ENCODE measurements at regions of chr5 and their contacts with region 1.

Region 1: GRCh38 chr5:87069974-87070624 is 197.6 kb upstream of the RASA1 start:
- DNase-seq: peak; percentile 59
- ATAC-seq: peak; percentile 86
- H3K4me3 ChIP-seq: no peak overlapping the region
- H3K27ac ChIP-seq: peak overlapping the region; percentile 17; the same call in 1 of the 2 replicates
- H3K4me1 ChIP-seq: peaks cover 17% of the 10 kb centered on the region
- H3K27me3 ChIP-seq: no peaks in the 10 kb centered on the region
- CTCF ChIP-seq: peak; percentile 47 to 62 (median 49); a peak in 4 of 6 replicates
- EP300 ChIP-seq: no peak
- POLR2A ChIP-seq: no peak
- RAD21 ChIP-seq: peak; percentile 90

Region 2: GRCh38 chr5:87094833-87095232 is 24.7 kb after region 1 on chr5:
- CTCF ChIA-PET with region 1: interaction called, 8 read pairs
- POLR2A ChIA-PET with region 1: no interaction called
- RAD21 ChIA-PET with region 1: interaction called, 9 read pairs
- SMC1A ChIA-PET with region 1: interaction called, 15 read pairs
- in situ Hi-C with region 1: no loop called
- intact Hi-C with region 1: no loop called
- DNase-seq: no peak
- ATAC-seq: no peak
- H3K4me3 ChIP-seq: no peak overlapping the region
- H3K27ac ChIP-seq: no peak overlapping the region
- H3K4me1 ChIP-seq: no peaks in the 10 kb centered on the region
- H3K27me3 ChIP-seq: no peaks in the 10 kb centered on the region
- CTCF ChIP-seq: no peak
- EP300 ChIP-seq: no peak
- POLR2A ChIP-seq: no peak
- RAD21 ChIP-seq: no peak

Region 3: DNA sequence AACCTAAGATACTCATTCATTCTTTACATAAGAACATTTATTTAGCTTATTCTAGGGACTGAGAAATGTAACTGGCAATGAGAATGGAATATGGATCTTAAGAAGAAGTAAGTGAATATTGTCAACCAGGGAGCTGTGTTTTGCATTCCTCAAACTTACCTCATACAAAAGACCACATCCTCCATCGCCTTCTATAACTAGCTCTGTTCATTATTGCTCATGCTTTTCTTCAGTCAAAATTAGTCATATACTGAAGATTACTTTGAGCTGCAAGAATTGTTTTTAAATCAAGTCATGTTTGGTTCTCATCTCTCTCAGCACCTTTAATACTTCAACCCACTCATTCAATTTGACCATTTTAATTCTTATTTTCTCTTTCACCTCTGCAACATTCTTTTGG is 57.3 kb after region 1 on chr5:
- CTCF ChIA-PET with region 1: interaction called, 11 read pairs
- POLR2A ChIA-PET with region 1: interaction called, 4 read pairs
- RAD21 ChIA-PET with region 1: interaction called, 15 read pairs
- SMC1A ChIA-PET with region 1: interaction called, 18 read pairs
- in situ Hi-C with region 1: no loop called
- intact Hi-C with region 1: no loop called
- DNase-seq: no peak
- ATAC-seq: peak; percentile 61
- H3K4me3 ChIP-seq: no peak overlapping the region
- H3K27ac ChIP-seq: no peak overlapping the region
- H3K4me1 ChIP-seq: peaks cover 3% of the 10 kb centered on the region
- H3K27me3 ChIP-seq: no peaks in the 10 kb centered on the region
- CTCF ChIP-seq: no peak
- EP300 ChIP-seq: no peak
- POLR2A ChIP-seq: no peak
- RAD21 ChIP-seq: no peak

Region 4: GRCh38 chr5:87231037-87231819 is 161.1 kb after region 1 on chr5:
- CTCF ChIA-PET with region 1: interaction called, 12 read pairs
- POLR2A ChIA-PET with region 1: interaction called, 3 read pairs
- RAD21 ChIA-PET with region 1: interaction called, 21 read pairs
- SMC1A ChIA-PET with region 1: interaction called, 25 read pairs
- in situ Hi-C with region 1: no loop called
- intact Hi-C with region 1: no loop called
- DNase-seq: peak; percentile 83
- ATAC-seq: peak; percentile 90
- H3K4me3 ChIP-seq: no peak overlapping the region
- H3K27ac ChIP-seq: peak overlapping the region; percentile 99
- H3K4me1 ChIP-seq: peaks cover 21% of the 10 kb centered on the region
- H3K27me3 ChIP-seq: no peaks in the 10 kb centered on the region
- CTCF ChIP-seq: no peak
- EP300 ChIP-seq: peak in 1 of 2 experiments; percentile 65; a peak in 1 of 4 replicates
- POLR2A ChIP-seq: no peak
- RAD21 ChIP-seq: peak; percentile 37

Region 5: DNA sequence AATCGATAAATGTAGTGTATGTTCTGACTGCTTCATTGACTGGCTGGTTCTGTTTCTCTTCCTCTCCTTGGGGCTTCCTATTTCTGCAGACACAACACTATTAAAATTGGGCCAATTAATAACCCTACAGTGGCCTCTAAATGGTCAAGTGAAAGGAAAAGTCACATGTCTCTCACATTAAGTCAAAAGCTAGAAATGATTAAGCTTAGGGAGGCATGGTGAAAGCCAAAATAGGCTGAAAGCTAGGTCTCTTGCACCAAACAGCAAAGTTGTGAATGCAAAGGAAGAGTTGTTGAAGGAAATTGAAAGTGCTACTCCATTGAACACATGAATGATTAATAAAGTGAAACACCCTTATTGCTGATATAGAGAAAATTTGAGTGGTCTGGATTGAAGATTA is 284.4 kb after region 1 on chr5:
- CTCF ChIA-PET with region 1: interaction called, 7 read pairs
- POLR2A ChIA-PET with region 1: interaction called, 4 read pairs
- RAD21 ChIA-PET with region 1: interaction called, 5 read pairs
- SMC1A ChIA-PET with region 1: interaction called, 19 read pairs
- in situ Hi-C with region 1: no loop called
- intact Hi-C with region 1: loop called (anchors 5 kb)
- DNase-seq: peak; percentile 27
- ATAC-seq: peak; percentile 84
- H3K4me3 ChIP-seq: no peak overlapping the region
- H3K27ac ChIP-seq: no peak overlapping the region
- H3K4me1 ChIP-seq: peaks cover 3% of the 10 kb centered on the region; the same call in 1 of the 2 replicates
- H3K27me3 ChIP-seq: no peaks in the 10 kb centered on the region
- CTCF ChIP-seq: no peak
- EP300 ChIP-seq: no peak
- POLR2A ChIP-seq: no peak
- RAD21 ChIP-seq: no peak

Region 6: DNA sequence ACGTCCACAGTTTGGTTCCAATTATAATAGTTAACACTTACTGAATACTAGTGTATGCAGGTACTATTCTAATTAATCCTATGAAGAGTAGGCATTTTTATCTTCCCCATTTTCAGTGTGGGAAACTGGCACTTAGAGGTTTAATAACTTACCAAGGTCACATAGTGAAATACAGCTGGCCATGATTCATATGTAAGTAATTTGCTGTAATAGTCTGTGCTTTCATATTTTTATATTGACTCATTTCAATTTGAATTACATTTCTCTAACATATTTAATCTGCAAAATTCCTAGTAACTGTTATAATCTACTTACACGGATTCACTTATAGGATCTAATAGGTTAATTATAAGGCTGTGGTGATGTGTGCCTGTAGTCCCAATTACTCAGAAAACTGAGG is 323.2 kb after region 1 on chr5:
- CTCF ChIA-PET with region 1: interaction called, 121 read pairs
- POLR2A ChIA-PET with region 1: interaction called, 6 read pairs
- RAD21 ChIA-PET with region 1: interaction called, 70 read pairs
- SMC1A ChIA-PET with region 1: interaction called, 94 read pairs
- in situ Hi-C with region 1: no loop called
- intact Hi-C with region 1: no loop called
- DNase-seq: no peak
- ATAC-seq: no peak
- H3K4me3 ChIP-seq: no peak overlapping the region
- H3K27ac ChIP-seq: no peak overlapping the region
- H3K4me1 ChIP-seq: no peaks in the 10 kb centered on the region
- H3K27me3 ChIP-seq: no peaks in the 10 kb centered on the region
- CTCF ChIP-seq: no peak
- EP300 ChIP-seq: no peak
- POLR2A ChIP-seq: no peak
- RAD21 ChIP-seq: no peak

Region 7: GRCh38 chr5:87412630-87413342 is 342.7 kb after region 1 on chr5 and contains the start of gene CCNH:
- CTCF ChIA-PET with region 1: interaction called, 9 read pairs
- POLR2A ChIA-PET with region 1: interaction called, 3 read pairs
- RAD21 ChIA-PET with region 1: interaction called, 11 read pairs
- SMC1A ChIA-PET with region 1: interaction called, 6 read pairs
- in situ Hi-C with region 1: no loop called
- intact Hi-C with region 1: no loop called
- DNase-seq: peak; percentile 93
- ATAC-seq: peak; percentile 95
- H3K4me3 ChIP-seq: peak within 1 kb of the TSS; percentile 93
- H3K27ac ChIP-seq: peak within 1 kb of the TSS; percentile 95
- H3K4me1 ChIP-seq: peaks cover 3% of the 10 kb centered on the region; the same call in 1 of the 2 replicates
- H3K27me3 ChIP-seq: no peaks in the 10 kb centered on the region
- CTCF ChIP-seq: no peak
- EP300 ChIP-seq: no peak
- POLR2A ChIP-seq: peak; percentile 97
- RAD21 ChIP-seq: no peak
- polyA plus RNA-seq, gene CCNH: 110 to 116 TPM

Measured in GM12878 (cell line).